Activated T-helper 2 cell treated with anti-CD3 and anti-CD28 coated beads, Interferon-gamma antibody, Interleukin-2, Interleukin-4, amounts not matched to agents 10 μg/mL and 5 μg/mL and 100 μg/mL, durations not matched to agents 14 hours and 24 hours and 36 hours (primary cell): ENCODE measurements at regions of chr12 and their contacts with region 1.

Region 1: GRCh38 chr12:75842090-75842489 is 189.5 kb downstream of the PHLDA1 start:
- DNase-seq: no peak
- H3K4me3 Mint-ChIP-seq: no peak overlapping the region
- H3K27ac Mint-ChIP-seq: no peak overlapping the region
- H3K4me1 Mint-ChIP-seq: peaks cover 1% of the 10 kb centered on the region
- H3K27me3 Mint-ChIP-seq: peaks cover 23% of the 10 kb centered on the region

Region 2: GRCh38 chr12:75528692-75529091 is 313.4 kb before region 1 on chr12:
- intact Hi-C with region 1: no loop called
- DNase-seq: no peak
- H3K4me3 Mint-ChIP-seq: no peak overlapping the region
- H3K27ac Mint-ChIP-seq: no peak overlapping the region
- H3K4me1 Mint-ChIP-seq: peaks cover 12% of the 10 kb centered on the region
- H3K27me3 Mint-ChIP-seq: peaks cover 38% of the 10 kb centered on the region

Region 3: GRCh38 chr12:75722714-75723200 is 119.3 kb before region 1 on chr12:
- intact Hi-C with region 1: no loop called
- DNase-seq: peak; percentile 25
- H3K4me3 Mint-ChIP-seq: no peak overlapping the region
- H3K27ac Mint-ChIP-seq: peak overlapping the region; percentile 78
- H3K4me1 Mint-ChIP-seq: peaks cover 19% of the 10 kb centered on the region
- H3K27me3 Mint-ChIP-seq: peaks cover 2% of the 10 kb centered on the region

Region 4: GRCh38 chr12:75883241-75883640 is 41.2 kb after region 1 on chr12:
- intact Hi-C with region 1: loop called (anchors 5 kb)
- DNase-seq: no peak
- H3K4me3 Mint-ChIP-seq: no peak overlapping the region
- H3K27ac Mint-ChIP-seq: no peak overlapping the region
- H3K4me1 Mint-ChIP-seq: peaks cover 2% of the 10 kb centered on the region
- H3K27me3 Mint-ChIP-seq: peaks cover 46% of the 10 kb centered on the region